ENCODE measurements at regions of chr2 and their contacts with region 1.

Region 1: DNA sequence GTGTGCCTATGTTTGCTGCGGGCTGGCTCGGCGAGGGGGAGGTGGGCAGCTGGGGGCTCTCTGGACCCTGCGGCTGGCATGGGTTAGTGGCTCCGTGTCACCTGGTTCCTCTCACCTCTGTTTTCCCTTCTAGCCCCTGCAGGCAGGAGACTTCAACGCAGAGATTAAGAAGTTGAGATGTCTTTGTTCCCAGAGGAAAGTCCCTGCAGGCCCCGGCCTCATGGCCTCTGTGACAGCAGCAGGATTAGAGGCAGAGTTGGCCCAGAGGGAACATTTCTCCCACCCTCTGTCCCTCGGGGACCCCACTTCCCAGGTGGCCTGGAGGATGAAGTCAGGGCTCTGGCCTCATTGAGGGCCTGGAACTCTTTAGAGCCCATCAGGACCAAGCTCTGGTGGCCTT is 56.5 kb downstream of the HPCAL1 start:
- DNase-seq: no peak
- H3K4me3 ChIP-seq: no peak overlapping the region
- H3K27ac ChIP-seq: no peak overlapping the region
- H3K4me1 ChIP-seq: no peaks in the 10 kb centered on the region
- H3K27me3 ChIP-seq: no peaks in the 10 kb centered on the region
- CTCF ChIP-seq: no peak
- EP300 ChIP-seq: no peak
- POLR2A ChIP-seq: no peak

Region 2: GRCh38 chr2:10193851-10194820 is 165.1 kb before region 1 on chr2:
- in situ Hi-C with region 1: no loop called
- intact Hi-C with region 1: no loop called
- DNase-seq: no peak
- H3K4me3 ChIP-seq: no peak overlapping the region
- H3K27ac ChIP-seq: no peak overlapping the region
- H3K4me1 ChIP-seq: no peaks in the 10 kb centered on the region
- H3K27me3 ChIP-seq: no peaks in the 10 kb centered on the region
- CTCF ChIP-seq: no peak
- EP300 ChIP-seq: no peak
- POLR2A ChIP-seq: no peak

Region 3: GRCh38 chr2:10331702-10332401 is 27.4 kb before region 1 on chr2:
- in situ Hi-C with region 1: no loop called
- intact Hi-C with region 1: loop called (anchors 1 kb)
- DNase-seq: peak; percentile 51
- H3K4me3 ChIP-seq: peak overlapping the region in 1 of 4 donors; percentile 32
- H3K27ac ChIP-seq: peak overlapping the region; percentile 47 to 70 (median 66)
- H3K4me1 ChIP-seq: peaks cover 18 to 51% (median 46%) of the 10 kb centered on the region in 4 donors
- H3K27me3 ChIP-seq: no peaks in the 10 kb centered on the region
- CTCF ChIP-seq: no peak
- EP300 ChIP-seq: no peak
- POLR2A ChIP-seq: no peak

Measured in transverse colon (tissue), 4 donors.